Activated T-helper 1 cell treated with anti-CD3 and anti-CD28 coated beads, Interleukin-12 subunit alpha, Interleukin-12 subunit beta, Interleukin-2, Interleukin-4 antibody, amounts not matched to agents 30 ng/mL and 10 ng/mL and 1 ng/mL, durations not matched to agents 14 hours and 24 hours and 36 hours (primary cell): ENCODE measurements at regions of chr13 and their contacts with region 1.

Region 1: GRCh38 chr13:24038841-24039330 is 121.6 kb upstream of the SPATA13 start:
- DNase-seq: no peak
- H3K4me3 Mint-ChIP-seq: peak overlapping the region; percentile 30
- H3K27ac Mint-ChIP-seq: peak overlapping the region; percentile 51
- H3K4me1 Mint-ChIP-seq: peaks cover 44% of the 10 kb centered on the region
- H3K27me3 Mint-ChIP-seq: peaks cover 3% of the 10 kb centered on the region

Region 2: GRCh38 chr13:23980160-23980551 is 58.7 kb before region 1 on chr13:
- intact Hi-C with region 1: loop called (anchors 2 kb)
- DNase-seq: peak; percentile 89
- H3K4me3 Mint-ChIP-seq: peak overlapping the region; percentile 90
- H3K27ac Mint-ChIP-seq: peak overlapping the region; percentile 79
- H3K4me1 Mint-ChIP-seq: peaks cover 18% of the 10 kb centered on the region
- H3K27me3 Mint-ChIP-seq: peaks cover 53% of the 10 kb centered on the region